Naive thymus-derived CD4-positive, alpha-beta T cell (primary cell): ENCODE measurements at regions of chr12 and their contacts with region 1.

Region 1: DNA sequence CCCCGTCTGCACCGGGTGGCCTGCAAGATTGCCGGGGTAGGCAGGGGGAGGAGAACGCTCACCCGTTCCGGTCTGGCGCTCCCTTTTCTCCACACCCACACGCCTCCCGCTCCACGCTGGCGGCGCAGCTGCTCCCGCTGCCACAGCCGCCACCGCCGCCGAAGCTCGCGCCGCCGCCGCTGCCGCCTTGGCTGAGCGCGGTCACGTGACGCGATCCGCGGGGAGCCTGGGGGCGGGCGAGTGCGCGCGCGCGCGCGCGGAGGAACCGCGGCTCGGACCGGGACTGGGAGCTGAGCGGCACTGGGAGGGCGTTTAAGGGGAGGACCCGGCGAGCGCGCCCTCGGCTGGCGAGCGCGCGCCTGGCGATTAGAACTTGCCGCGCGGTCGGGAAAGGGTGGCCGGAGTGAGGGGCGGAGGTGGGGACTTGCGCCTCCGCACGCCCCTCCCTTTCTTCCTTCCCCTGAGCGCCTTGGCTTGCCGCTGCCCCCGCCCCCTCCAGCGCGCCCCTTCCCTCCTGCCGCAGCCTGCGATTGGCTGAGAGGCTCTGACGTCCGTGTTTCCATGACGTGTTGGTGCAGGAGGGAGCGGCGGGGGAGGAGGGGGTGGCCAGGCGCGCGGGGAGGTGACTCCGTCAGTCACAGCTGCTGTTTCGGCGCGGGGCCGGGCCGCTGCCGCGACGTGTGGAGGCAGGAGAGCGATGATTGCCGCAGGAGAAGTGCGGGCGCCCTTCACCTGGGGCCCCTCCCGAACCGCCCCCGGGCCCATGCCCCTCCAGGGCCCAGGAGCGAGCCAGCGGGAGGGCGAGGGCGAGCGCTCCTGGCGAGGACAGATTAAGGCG is 738 bp upstream of the ATP2B1 start:
- DNase-seq: peak; percentile 94 to 99 (median 97)
- ATAC-seq: peak; percentile 85
- H3K4me3 ChIP-seq: peak overlapping the region; percentile 90
- H3K4me3 Mint-ChIP-seq: peak overlapping the region; percentile 89 to 99 (median 93)
- H3K27ac ChIP-seq: peak overlapping the region; percentile 92
- H3K27ac Mint-ChIP-seq: peak overlapping the region; percentile 85 to 100 (median 95)
- H3K4me1 ChIP-seq: peaks cover 11 to 21% of the 10 kb centered on the region in 2 donors
- H3K4me1 Mint-ChIP-seq: peaks cover 17 to 42% (median 37%) of the 10 kb centered on the region in 7 donors
- H3K27me3 ChIP-seq: no peaks in the 10 kb centered on the region
- H3K27me3 Mint-ChIP-seq: peaks cover 0 to 54% (median 0%) of the 10 kb centered on the region in 5 donors

Region 2: DNA sequence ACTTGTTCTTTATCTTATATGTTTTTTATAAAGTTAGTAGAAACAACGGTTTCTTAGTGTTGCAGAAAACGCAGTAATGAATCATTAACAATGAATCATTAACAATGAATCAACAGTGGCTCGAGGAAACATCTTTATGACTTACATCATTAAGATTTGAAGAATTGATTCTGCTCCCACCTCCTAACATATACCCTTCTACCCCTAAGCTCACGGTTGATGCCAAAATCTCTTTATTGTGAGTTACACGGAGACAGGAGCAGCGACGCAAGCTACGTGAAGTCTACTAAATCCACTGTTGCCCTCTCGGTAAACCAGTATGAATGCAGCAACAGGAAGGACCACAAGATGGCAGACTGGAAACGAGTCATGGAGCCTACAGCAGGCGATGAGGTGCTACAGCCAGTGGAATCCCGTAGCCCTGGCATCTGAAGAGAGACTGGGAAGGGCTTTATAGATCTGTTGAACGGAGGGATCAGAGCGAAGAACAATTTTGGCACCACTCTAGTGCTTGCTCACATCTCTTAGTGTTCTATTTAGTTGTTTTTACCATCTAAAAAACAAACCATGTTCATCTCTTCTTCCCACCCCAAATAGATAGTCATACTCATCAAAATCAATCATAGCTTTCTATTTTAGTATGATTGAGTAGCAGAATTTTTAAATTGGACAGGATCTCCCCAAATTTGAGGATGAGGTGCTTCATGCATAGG is 689.8 kb before region 1 on chr12:
- CTCF ChIA-PET with region 1: no interaction called
- POLR2A ChIA-PET with region 1: no interaction called
- intact Hi-C with region 1: loop called (anchors 5 kb)
- DNase-seq: peak; percentile 27 to 75 (median 60)
- ATAC-seq: peak; percentile 96
- H3K4me3 ChIP-seq: peak overlapping the region; percentile 14
- H3K4me3 Mint-ChIP-seq: no peak overlapping the region
- H3K27ac ChIP-seq: no peak overlapping the region
- H3K27ac Mint-ChIP-seq: no peak overlapping the region
- H3K4me1 ChIP-seq: peaks cover 0 to 8% of the 10 kb centered on the region in 2 donors
- H3K4me1 Mint-ChIP-seq: peaks cover 0 to 29% (median 5%) of the 10 kb centered on the region in 7 donors
- H3K27me3 ChIP-seq: no peaks in the 10 kb centered on the region
- H3K27me3 Mint-ChIP-seq: peaks cover 0 to 13% (median 5%) of the 10 kb centered on the region in 5 donors

Region 3: DNA sequence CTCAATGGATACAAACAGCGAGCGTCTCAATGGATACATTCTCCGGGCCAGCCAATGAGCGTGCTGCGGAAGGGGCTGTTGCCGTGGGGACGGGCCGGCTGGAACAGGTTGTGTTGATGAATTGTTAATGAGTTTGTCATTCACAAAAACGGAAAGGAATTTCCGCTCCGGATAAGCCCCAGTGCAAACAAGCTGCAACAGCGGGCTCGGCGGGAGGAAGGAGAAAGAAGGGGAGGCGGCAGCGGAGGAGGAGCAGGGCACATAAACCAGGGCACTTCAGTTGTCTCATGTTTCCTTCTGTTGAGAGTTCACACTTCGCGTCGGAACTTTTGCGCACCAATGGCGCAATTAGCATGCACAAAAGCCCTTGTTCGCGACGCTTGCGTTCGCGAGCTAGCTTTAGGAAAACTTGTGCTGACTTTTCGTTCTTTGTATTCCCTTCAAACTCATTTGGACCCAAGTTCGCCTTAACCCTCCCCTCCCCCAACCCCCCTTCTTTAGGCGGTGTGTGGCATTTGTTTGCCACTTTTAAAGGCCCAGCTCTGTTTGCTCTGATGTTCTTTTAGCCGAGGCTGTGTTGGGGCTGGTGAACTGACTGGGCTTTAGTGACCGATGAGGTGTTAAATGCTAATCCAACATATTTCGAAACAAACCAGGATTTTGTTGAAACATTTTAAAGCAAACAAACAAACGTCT is 356.7 kb before region 1 on chr12 and contains the start of gene DUSP6:
- CTCF ChIA-PET with region 1: no interaction called
- POLR2A ChIA-PET with region 1: no interaction called
- intact Hi-C with region 1: loop called (anchors 1 kb)
- DNase-seq: peak; percentile 60 to 90 (median 83)
- ATAC-seq: peak; percentile 84
- H3K4me3 ChIP-seq: peak within 1 kb of the TSS; percentile 68
- H3K4me3 Mint-ChIP-seq: peak within 1 kb of the TSS; percentile 88 to 98 (median 90)
- H3K27ac ChIP-seq: peak within 1 kb of the TSS; percentile 35
- H3K27ac Mint-ChIP-seq: peak within 1 kb of the TSS; percentile 35 to 97 (median 79)
- H3K4me1 ChIP-seq: peaks cover 23 to 25% of the 10 kb centered on the region in 2 donors
- H3K4me1 Mint-ChIP-seq: peaks cover 19 to 55% (median 48%) of the 10 kb centered on the region in 7 donors
- H3K27me3 ChIP-seq: no peaks in the 10 kb centered on the region
- H3K27me3 Mint-ChIP-seq: peaks cover 0 to 4% (median 0%) of the 10 kb centered on the region in 5 donors
- total RNA-seq, gene DUSP6: 2.7 to 225 (median 33.8) TPM

Region 4: DNA sequence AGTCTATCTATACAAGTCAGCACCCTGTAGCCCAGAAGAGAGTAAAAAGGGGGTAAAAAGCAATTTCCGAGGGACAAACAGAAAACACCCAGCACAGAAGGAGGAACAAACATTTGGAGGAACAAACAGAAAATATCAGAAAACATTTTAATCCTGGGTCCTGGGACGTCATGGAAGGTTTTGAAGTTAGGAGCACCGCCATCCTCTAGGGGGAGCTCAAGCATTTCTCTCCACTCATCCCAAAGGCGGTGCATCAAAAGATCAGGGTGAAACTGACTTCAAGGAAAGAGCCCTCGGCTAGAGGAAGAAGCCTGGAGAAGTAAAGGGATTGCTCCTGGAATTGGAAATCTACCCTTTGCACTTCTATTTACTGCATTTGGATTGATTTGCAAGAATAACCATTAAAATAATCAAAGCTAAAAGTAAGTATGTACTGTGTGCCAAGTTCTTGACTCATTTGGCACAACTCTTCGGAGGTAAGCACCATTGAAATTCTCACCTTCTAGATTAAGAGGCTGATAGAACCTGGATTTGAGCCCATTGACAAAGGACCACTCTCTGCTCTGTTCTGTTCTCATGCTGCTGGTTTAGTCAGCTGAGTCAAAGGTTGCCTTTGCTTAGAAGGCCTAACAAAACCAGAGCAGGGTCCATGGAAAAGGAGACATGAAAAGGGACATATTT is 166.3 kb before region 1 on chr12:
- CTCF ChIA-PET with region 1: no interaction called
- POLR2A ChIA-PET with region 1: no interaction called
- intact Hi-C with region 1: loop called (anchors 5 kb)
- DNase-seq: peak; percentile 20 to 75 (median 64)
- ATAC-seq: peak; percentile 91
- H3K4me3 ChIP-seq: no peak overlapping the region
- H3K4me3 Mint-ChIP-seq: peak overlapping the region in 1 of 10 donors; percentile 36
- H3K27ac ChIP-seq: no peak overlapping the region
- H3K27ac Mint-ChIP-seq: peak overlapping the region in 1 of 9 donors; percentile 3
- H3K4me1 ChIP-seq: no peaks in the 10 kb centered on the region
- H3K4me1 Mint-ChIP-seq: peaks cover 5 to 10% (median 6%) of the 10 kb centered on the region in 7 donors
- H3K27me3 ChIP-seq: no peaks in the 10 kb centered on the region
- H3K27me3 Mint-ChIP-seq: peaks cover 0 to 4% (median 0%) of the 10 kb centered on the region in 5 donors

Region 5: GRCh38 chr12:89756585-89757321 is 47.4 kb after region 1 on chr12:
- CTCF ChIA-PET with region 1: no interaction called
- POLR2A ChIA-PET with region 1: interaction called, 3 read pairs
- intact Hi-C with region 1: loop called (anchors 1 to 5 kb)
- DNase-seq: peak in 3 of 9 donors; percentile 11 to 31 (median 12)
- ATAC-seq: peak; percentile 86
- H3K4me3 ChIP-seq: no peak overlapping the region
- H3K4me3 Mint-ChIP-seq: peak overlapping the region in 1 of 10 donors; percentile 1
- H3K27ac ChIP-seq: no peak overlapping the region
- H3K27ac Mint-ChIP-seq: peak overlapping the region in 4 of 9 donors; percentile 6 to 75 (median 42)
- H3K4me1 ChIP-seq: peaks cover 4 to 28% of the 10 kb centered on the region in 2 donors
- H3K4me1 Mint-ChIP-seq: peaks cover 14 to 28% (median 25%) of the 10 kb centered on the region in 7 donors
- H3K27me3 ChIP-seq: no peaks in the 10 kb centered on the region
- H3K27me3 Mint-ChIP-seq: no peaks in the 10 kb centered on the region

Region 6: DNA sequence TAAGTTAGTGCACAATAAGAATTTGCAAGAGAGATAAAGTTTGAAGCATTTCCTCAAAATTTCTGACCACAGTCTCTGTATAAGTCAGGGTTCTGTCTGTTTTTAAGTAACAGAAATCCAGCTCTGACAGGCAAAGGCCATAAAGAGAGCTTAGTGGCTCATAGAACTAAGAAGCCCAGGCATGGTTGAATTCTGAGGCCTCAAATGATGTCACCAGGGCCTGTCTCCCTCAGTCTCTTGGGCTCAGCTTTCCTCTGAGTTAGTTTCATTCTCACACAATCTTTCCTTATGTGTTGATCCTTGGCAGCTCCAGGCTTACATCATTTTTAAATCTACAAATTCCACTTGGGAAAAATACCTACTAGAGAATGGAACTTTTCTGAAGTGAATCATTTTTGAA is 172.7 kb after region 1 on chr12:
- CTCF ChIA-PET with region 1: no interaction called
- POLR2A ChIA-PET with region 1: interaction called, 19 read pairs
- intact Hi-C with region 1: loop called (anchors 1 kb)
- DNase-seq: no peak
- ATAC-seq: peak; percentile 31
- H3K4me3 ChIP-seq: no peak overlapping the region
- H3K4me3 Mint-ChIP-seq: peak overlapping the region in 7 of 10 donors; percentile 30 to 83 (median 75)
- H3K27ac ChIP-seq: peak overlapping the region; percentile 28
- H3K27ac Mint-ChIP-seq: peak overlapping the region; percentile 82 to 95 (median 91)
- H3K4me1 ChIP-seq: peaks cover 31 to 36% of the 10 kb centered on the region in 2 donors
- H3K4me1 Mint-ChIP-seq: peaks cover 23 to 62% (median 57%) of the 10 kb centered on the region in 7 donors
- H3K27me3 ChIP-seq: no peaks in the 10 kb centered on the region
- H3K27me3 Mint-ChIP-seq: peaks cover 0 to 3% (median 0%) of the 10 kb centered on the region in 5 donors

Region 7: DNA sequence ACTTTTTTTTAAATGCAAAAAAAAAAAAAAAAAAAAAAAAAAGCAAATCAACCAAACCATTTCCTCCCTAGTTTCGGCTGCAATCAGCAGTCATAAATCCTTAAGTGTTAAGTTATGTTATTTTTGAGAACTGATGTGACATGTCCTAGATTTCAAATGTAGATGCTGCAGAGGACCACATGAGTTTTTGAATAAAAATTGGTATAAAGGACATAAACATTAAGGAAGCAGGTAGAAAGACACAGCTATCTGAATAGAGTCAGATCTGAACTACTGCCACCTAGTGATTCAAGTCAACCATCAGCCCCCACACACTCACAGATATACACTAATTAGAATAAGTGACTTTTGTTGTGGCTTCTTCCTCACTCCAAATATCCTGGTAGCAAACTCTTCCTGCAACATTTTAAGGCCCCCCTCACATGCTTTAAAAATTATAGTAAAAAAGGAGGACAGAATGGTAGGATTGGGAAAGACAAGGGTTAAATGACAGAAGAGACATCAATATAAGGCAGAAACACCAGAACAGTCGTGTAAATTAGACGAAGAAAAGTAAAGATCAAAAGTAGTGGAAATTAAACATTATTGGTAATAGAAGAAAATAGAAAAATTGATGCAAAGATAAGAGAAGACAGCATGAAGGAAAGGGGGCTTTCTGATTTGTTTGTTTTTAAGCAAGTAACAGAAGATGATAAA is 393.7 kb after region 1 on chr12:
- CTCF ChIA-PET with region 1: interaction called, 3 read pairs
- POLR2A ChIA-PET with region 1: interaction called, 3 read pairs
- intact Hi-C with region 1: loop called (anchors 1 to 2 kb)
- DNase-seq: peak in 6 of 9 donors; percentile 17 to 56 (median 44)
- ATAC-seq: peak; percentile 79
- H3K4me3 ChIP-seq: no peak overlapping the region
- H3K4me3 Mint-ChIP-seq: peak overlapping the region in 8 of 10 donors; percentile 47 to 75 (median 70)
- H3K27ac ChIP-seq: no peak overlapping the region
- H3K27ac Mint-ChIP-seq: peak overlapping the region in 4 of 9 donors; percentile 38 to 63 (median 48)
- H3K4me1 ChIP-seq: no peaks in the 10 kb centered on the region
- H3K4me1 Mint-ChIP-seq: peaks cover 4 to 12% (median 6%) of the 10 kb centered on the region in 7 donors
- H3K27me3 ChIP-seq: no peaks in the 10 kb centered on the region
- H3K27me3 Mint-ChIP-seq: peaks cover 4 to 15% (median 11%) of the 10 kb centered on the region in 5 donors